ENCODE measurements at regions of chr6 and their contacts with region 1.

Region 1: DNA sequence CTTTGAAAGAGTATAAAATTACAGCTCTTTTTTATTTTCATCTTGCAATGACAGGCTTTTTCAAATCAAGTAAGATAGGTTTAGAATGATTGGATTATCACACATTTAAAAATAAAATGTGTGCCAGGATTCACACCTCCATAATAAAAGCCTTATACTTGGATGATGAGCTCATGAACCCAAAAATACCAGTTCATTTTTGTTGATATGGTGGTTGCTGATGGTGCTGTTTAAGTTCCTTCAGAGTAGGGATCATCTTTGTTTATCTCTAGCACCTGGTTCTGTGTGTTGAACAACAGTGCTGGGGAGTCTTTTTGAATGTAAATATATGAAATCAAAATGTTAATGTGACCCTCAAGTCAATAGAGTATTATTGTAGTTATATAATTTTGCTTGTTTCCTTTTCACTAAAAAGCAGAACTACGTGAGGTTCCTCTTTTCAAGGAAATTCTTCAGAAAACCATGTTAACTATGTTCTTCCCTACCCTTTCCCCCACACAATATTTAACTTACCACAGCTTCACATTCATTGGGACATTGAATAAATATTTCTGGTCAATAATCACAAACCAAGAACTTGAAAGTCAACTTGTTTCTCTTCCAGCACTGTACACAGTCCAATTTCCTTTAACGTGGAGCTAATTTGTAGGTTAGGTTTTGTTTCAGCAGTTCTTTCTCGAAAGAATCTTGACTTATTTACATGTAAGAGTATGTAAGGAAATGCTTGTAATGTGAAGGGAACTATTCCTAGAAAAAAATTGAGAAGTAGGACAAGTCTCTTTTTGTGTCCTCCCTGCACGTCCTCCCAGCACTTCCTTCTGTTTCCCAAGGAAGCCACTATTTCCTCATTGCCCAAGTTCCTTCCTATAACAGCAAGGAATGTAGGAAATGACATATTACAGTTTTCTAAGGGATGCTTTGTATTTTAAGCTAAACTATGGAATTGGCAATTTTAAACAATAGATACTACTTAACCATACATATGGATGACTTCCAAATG is 945.9 kb upstream of the CITED2 start:
- H3K4me3 Mint-ChIP-seq: peak overlapping the region; percentile 39
- H3K27ac Mint-ChIP-seq: peak overlapping the region; percentile 89
- H3K4me1 Mint-ChIP-seq: peaks cover 23% of the 10 kb centered on the region
- H3K27me3 Mint-ChIP-seq: no peaks in the 10 kb centered on the region

Region 2: GRCh38 chr6:140393665-140394540 is 73.5 kb after region 1 on chr6:
- intact Hi-C with region 1: loop called (anchors 5 kb)
- H3K4me3 Mint-ChIP-seq: no peak overlapping the region
- H3K27ac Mint-ChIP-seq: peak overlapping the region; percentile 80
- H3K4me1 Mint-ChIP-seq: peaks cover 15% of the 10 kb centered on the region
- H3K27me3 Mint-ChIP-seq: no peaks in the 10 kb centered on the region

Region 3: GRCh38 chr6:140871911-140872310 is 551.5 kb after region 1 on chr6:
- intact Hi-C with region 1: no loop called
- H3K4me3 Mint-ChIP-seq: no peak overlapping the region
- H3K27ac Mint-ChIP-seq: no peak overlapping the region
- H3K4me1 Mint-ChIP-seq: peaks cover 5% of the 10 kb centered on the region
- H3K27me3 Mint-ChIP-seq: no peaks in the 10 kb centered on the region

Measured in dendritic cell treated with granulocyte-macrophage colony-stimulating factor and Interleukin-4, amounts not matched to agents 40 ng/mL and 50 ng/mL, for 4 days (primary cell).